ENCODE measurements at regions of chr10 and their contacts with region 1.

Region 1: DNA sequence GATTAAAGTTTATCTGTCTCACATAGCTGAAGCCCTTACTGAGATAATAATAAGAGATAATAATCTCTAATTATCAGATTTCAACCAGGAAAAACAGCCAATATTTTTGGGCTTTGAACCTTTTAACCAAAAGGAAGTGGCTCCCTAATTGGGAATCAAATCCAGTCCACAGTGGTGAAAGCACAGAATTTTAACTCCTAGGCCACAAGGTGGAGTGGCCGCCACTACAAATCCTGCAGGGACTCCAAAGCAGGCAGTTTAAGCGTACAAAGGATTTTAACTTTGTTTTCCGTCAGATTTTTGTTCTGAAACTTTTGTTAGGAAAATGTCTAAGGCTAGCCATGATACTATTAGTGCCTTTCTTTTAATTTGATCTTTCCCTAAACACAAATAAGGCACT is 99.6 kb upstream of the CCNY start:
- DNase-seq: peak; percentile 23 to 28
- H3K4me3 ChIP-seq: no peak overlapping the region
- H3K4me1 ChIP-seq: no peaks in the 10 kb centered on the region
- H3K27me3 ChIP-seq: no peaks in the 10 kb centered on the region

Region 2: DNA sequence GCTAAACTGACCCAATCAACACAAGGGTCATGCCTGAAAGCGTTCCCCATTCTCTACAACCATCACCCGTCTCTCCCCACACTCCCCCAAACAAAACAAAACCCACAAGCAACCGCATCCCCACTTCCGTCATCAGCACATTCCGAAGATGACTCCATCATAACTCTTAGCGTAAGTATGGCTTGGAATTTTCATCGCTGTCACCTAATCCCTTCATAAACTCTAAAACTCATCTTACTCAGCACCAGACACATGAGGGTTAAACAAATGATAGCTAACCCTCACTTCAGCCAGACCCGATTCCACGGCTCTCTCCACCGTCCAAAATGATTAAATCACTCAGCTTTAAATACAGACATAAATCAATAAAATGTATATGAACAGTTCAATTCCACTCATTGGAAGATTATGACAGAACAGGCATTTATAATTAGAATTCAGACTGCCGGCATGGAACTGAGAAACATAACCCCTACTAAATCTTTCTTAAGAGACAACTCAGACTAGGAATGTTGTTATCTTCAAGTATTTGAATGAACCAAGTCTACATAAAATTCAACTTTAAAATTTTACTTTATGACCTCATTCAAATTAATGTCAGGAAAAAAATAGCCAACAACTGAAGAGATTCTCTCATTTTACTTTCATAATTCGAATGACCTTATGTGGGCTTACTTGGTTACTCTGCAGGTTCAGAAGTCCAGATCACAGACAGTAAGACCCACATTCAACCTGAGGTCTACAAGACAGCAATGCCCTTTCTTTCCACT is 637.5 kb before region 1 on chr10:
- in situ Hi-C with region 1: no loop called
- DNase-seq: no peak
- H3K4me3 ChIP-seq: no peak overlapping the region
- H3K4me1 ChIP-seq: peaks cover under 1% of the 10 kb centered on the region
- H3K27me3 ChIP-seq: no peaks in the 10 kb centered on the region

Region 3: DNA sequence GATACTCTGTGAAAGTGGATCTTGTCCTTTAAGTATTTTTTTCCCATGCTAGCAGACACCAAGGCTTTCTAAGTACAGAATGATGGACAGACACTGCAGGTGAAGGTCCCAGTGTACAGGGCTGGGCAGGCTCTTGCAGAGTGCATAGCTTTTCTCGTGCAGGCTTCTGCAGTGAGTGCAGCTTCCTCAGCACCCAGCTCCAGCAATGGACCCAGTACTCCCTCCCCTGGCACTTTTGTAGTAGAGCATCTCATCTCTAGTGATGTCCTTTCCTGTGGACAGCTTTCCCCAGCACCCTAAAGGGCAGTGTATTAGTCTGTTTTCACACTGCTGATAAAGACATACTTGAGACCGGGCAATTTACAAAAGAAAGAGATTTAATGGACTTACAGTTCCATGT is 250.9 kb before region 1 on chr10:
- in situ Hi-C with region 1: no loop called
- DNase-seq: peak; percentile 38 to 56
- H3K4me3 ChIP-seq: no peak overlapping the region
- H3K4me1 ChIP-seq: no peaks in the 10 kb centered on the region
- H3K27me3 ChIP-seq: no peaks in the 10 kb centered on the region

Region 4: DNA sequence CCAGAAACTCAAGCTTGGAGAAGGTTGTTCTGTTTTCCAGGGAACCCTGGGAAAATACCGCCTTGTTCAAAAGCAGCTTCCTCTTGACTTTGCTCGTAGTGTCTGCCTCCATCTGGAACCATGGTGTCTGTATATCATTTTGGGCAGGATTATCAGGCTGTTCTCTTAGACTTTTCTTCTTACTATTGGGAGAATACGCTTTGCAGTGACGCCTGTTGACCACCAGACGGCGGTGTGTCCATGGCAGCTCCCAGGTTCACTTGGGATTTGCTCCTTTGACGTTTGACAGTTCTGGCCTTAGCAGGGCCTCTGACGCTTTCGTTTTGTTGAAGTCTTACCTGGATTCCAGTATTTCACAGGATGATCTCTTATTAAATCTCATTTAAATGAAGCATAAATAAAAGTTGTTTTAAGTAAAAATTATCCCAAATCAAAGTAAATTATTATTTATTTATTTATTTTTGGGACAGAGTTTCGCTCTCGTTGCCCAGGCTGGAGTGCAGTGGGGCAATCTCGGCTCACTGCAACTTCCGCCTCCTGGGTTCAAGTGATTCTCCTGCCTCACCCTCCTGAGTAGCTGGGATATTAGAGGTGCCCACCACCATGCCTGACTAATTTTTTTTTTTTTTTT is 326.6 kb after region 1 on chr10:
- in situ Hi-C with region 1: loop called (anchors 10 kb)
- DNase-seq: peak; percentile 70 to 75
- H3K4me3 ChIP-seq: no peak overlapping the region
- H3K4me1 ChIP-seq: no peaks in the 10 kb centered on the region
- H3K27me3 ChIP-seq: no peaks in the 10 kb centered on the region